ENCODE measurements at regions of chr17 and their contacts with region 1.

Region 1: GRCh38 chr17:27353461-27354050 is 59.6 kb downstream of the WSB1 start:
- DNase-seq: peak; percentile 98

Region 2: GRCh38 chr17:27455914-27456680 is 102.5 kb after region 1 on chr17 and contains the start of gene KSR1:
- intact Hi-C with region 1: loop called in 1 of 2 experiments (anchors 10 kb)
- DNase-seq: peak; percentile 93
- total RNA-seq, gene KSR1: 30.3 to 35.5 TPM

Measured in posterior vena cava (tissue), 2 donors.